Activated naive CD4-positive, alpha-beta T cell treated with anti-CD3 and anti-CD28 coated beads for 36 hours (primary cell): ENCODE measurements at regions of chr1 and their contacts with region 1.

Region 1: GRCh38 chr1:160607011-160607671 is 27.8 kb upstream of the CD84 start:
- DNase-seq: peak; percentile 81
- H3K4me3 Mint-ChIP-seq: no peak overlapping the region
- H3K27ac Mint-ChIP-seq: peak overlapping the region; percentile 82
- H3K4me1 Mint-ChIP-seq: peaks cover 48% of the 10 kb centered on the region
- H3K27me3 Mint-ChIP-seq: no peaks in the 10 kb centered on the region

Region 2: GRCh38 chr1:160193091-160193819 is 413.9 kb before region 1 on chr1:
- CTCF ChIA-PET with region 1: no interaction called
- intact Hi-C with region 1: loop called (anchors 1 kb)
- DNase-seq: peak; percentile 91
- H3K4me3 Mint-ChIP-seq: no peak overlapping the region
- H3K27ac Mint-ChIP-seq: no peak overlapping the region
- H3K4me1 Mint-ChIP-seq: no peaks in the 10 kb centered on the region
- H3K27me3 Mint-ChIP-seq: no peaks in the 10 kb centered on the region

Region 3: GRCh38 chr1:160539990-160540858 is 66.9 kb before region 1 on chr1:
- CTCF ChIA-PET with region 1: interaction called, 87 read pairs
- intact Hi-C with region 1: loop called (anchors 1 kb)
- DNase-seq: peak; percentile 73
- H3K4me3 Mint-ChIP-seq: peak overlapping the region; percentile 52
- H3K27ac Mint-ChIP-seq: peak overlapping the region; percentile 96
- H3K4me1 Mint-ChIP-seq: peaks cover 55% of the 10 kb centered on the region
- H3K27me3 Mint-ChIP-seq: no peaks in the 10 kb centered on the region

Region 4: DNA sequence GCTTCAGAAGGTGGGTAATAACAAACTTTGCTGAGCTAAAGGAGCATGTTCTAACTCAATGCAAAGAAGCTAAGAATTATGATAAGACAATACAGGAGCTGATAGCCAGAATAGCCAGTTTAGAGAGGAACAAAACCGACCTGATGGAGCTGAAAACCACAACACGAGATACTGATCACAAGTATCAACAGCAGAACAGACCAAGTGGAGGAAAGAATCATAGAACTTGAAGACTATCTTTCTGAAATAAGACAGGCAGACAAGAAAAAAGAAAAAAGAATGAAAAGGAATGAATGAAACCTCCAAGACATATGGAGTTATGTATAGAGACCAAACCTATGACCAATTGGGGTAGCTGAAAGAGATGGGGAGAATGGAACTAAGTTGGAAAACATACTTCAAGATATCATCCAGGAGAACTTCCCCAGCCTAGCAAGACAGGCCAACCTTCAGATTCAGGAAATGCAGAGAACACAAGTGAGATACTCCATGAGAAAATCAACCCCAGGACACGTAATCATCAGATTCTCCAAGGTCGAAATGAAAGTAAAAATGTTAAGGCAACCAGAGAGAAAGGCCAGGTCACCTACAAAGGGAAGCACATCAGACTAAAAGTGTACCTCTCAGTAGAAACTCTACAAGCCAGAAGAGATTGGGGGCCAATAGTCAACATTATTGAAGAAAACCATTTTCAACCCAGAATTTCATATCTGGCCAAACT is 48.3 kb before region 1 on chr1:
- CTCF ChIA-PET with region 1: interaction called, 39 read pairs
- intact Hi-C with region 1: no loop called
- DNase-seq: no peak
- H3K4me3 Mint-ChIP-seq: peak overlapping the region; percentile 11
- H3K27ac Mint-ChIP-seq: peak overlapping the region; percentile 20
- H3K4me1 Mint-ChIP-seq: peaks cover 48% of the 10 kb centered on the region
- H3K27me3 Mint-ChIP-seq: no peaks in the 10 kb centered on the region

Region 5: DNA sequence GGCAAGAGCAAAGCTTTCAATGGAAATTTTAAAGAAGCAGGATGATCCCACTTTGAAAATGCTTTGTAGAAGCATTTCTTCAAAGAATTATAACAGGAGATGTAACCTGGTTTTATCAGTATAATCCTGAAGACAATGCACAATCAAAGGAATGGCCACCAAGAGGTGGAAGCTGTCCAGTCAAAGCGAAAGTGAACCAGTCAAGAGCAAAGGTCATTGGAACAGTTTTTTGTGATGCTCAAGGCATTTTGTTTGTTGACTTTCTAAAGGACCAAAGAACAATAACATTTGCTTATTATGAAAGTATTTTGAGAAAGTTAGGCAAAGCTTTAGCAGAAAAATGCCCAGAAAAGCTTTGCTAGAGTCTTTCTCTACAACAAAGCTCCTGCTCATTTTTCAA is 22.4 kb before region 1 on chr1:
- CTCF ChIA-PET with region 1: interaction called, 22 read pairs
- intact Hi-C with region 1: loop called (anchors 2 kb)
- DNase-seq: no peak
- H3K4me3 Mint-ChIP-seq: no peak overlapping the region
- H3K27ac Mint-ChIP-seq: no peak overlapping the region
- H3K4me1 Mint-ChIP-seq: peaks cover 42% of the 10 kb centered on the region
- H3K27me3 Mint-ChIP-seq: no peaks in the 10 kb centered on the region